CD8-positive, alpha-beta T cell (primary cell): ENCODE measurements at regions of chr17 and their contacts with region 1.

Region 1: GRCh38 chr17:41665566-41666236 is 23.0 kb upstream of the EIF1 start:
- DNase-seq: peak; percentile 77 to 95 (median 89)
- ATAC-seq: peak; percentile 78
- H3K4me3 ChIP-seq: peak overlapping the region; percentile 56 to 61
- H3K4me3 Mint-ChIP-seq: peak overlapping the region; percentile 85
- H3K27ac ChIP-seq: peak overlapping the region; percentile 82 to 97
- H3K27ac Mint-ChIP-seq: peak overlapping the region; percentile 94
- H3K4me1 ChIP-seq: peaks cover 5% of the 10 kb centered on the region
- H3K4me1 Mint-ChIP-seq: peaks cover 24% of the 10 kb centered on the region
- H3K27me3 ChIP-seq: no peaks in the 10 kb centered on the region
- H3K27me3 Mint-ChIP-seq: no peaks in the 10 kb centered on the region
- CTCF ChIP-seq: peak; percentile 96

Region 2: DNA sequence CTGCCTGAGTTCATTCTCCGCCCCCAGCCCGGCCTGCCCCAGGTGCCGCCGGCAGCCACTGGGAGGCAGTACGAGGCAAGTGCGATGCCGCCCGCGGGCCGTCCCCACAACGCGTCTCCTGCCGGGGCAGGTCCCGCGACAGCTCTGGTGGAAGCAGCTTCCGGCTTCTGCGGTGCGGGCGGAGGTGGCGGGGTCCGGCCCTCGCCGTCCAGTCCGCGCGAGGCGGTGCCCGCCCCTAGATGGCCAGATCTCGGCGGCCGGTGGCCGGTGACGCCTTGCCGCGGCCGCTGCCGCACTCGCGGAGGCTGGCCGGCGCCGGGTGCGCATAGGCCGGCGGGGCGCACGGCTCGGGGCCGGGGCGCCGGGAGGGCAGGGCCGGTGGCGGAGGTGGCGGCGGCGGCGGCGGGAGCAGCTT is 1303.0 kb before region 1 on chr17:
- CTCF ChIA-PET with region 1: no interaction called
- POLR2A ChIA-PET with region 1: no interaction called
- intact Hi-C with region 1: loop called in 1 of 2 experiments (anchors 1 kb)
- DNase-seq: peak; percentile 55 to 82 (median 77)
- ATAC-seq: peak; percentile 79
- H3K4me3 ChIP-seq: peak overlapping the region in 1 of 2 experiments; percentile 20
- H3K4me3 Mint-ChIP-seq: peak overlapping the region; percentile 78
- H3K27ac ChIP-seq: no peak overlapping the region
- H3K27ac Mint-ChIP-seq: no peak overlapping the region
- H3K4me1 ChIP-seq: peaks cover 15% of the 10 kb centered on the region
- H3K4me1 Mint-ChIP-seq: peaks cover 10% of the 10 kb centered on the region
- H3K27me3 ChIP-seq: peaks cover 0 to 6% of the 10 kb centered on the region in 2 experiments
- H3K27me3 Mint-ChIP-seq: peaks cover 6% of the 10 kb centered on the region
- CTCF ChIP-seq: peak; percentile 62

Region 3: DNA sequence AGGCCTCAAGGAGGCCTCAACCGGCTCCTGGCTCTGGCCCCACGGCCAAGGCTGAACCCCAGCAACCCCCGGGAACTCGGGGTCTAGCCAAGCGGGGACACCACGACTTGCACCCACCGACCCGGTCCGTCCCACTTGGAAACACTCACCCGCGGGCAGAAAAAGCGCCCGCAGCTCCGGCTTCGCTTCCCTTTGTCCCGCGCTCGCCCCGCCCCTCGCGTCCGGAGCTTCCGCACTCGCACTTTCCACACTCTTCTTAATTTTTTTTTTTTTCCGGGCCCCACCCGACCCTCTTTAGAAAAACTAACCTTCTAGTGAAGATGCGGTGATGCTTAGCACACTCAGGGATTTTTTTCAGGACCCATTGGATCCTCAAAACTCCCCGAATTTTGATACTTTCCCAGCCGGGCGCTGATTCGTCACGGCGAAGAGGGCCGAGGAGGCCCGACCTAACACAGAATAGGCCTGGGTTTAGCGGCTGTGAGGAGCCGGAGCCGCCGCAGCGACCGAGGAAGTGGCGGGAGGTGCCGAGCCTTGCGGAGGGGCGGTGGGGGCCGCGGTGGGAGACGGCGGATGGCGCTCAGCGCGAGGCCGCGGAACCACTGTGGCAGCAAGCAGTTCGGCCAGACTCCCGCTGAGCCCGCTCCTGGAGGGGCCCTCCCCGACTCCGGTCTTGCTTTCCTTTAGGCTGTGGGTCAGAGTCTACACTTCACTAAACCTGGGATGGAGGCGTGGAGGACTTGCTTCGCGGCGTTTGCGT is 1017.9 kb before region 1 on chr17 and contains the start of gene SMARCE1:
- CTCF ChIA-PET with region 1: no interaction called
- POLR2A ChIA-PET with region 1: no interaction called
- intact Hi-C with region 1: loop called in 1 of 2 experiments (anchors 10 kb)
- DNase-seq: peak; percentile 51 to 88 (median 73)
- ATAC-seq: peak; percentile 66
- H3K4me3 ChIP-seq: peak within 1 kb of the TSS; percentile 85 to 96
- H3K4me3 Mint-ChIP-seq: peak within 1 kb of the TSS; percentile 95
- H3K27ac ChIP-seq: peak within 1 kb of the TSS; percentile 95 to 99
- H3K27ac Mint-ChIP-seq: peak within 1 kb of the TSS; percentile 99
- H3K4me1 ChIP-seq: peaks cover 36% of the 10 kb centered on the region
- H3K4me1 Mint-ChIP-seq: peaks cover 40% of the 10 kb centered on the region
- H3K27me3 ChIP-seq: no peaks in the 10 kb centered on the region
- H3K27me3 Mint-ChIP-seq: no peaks in the 10 kb centered on the region
- CTCF ChIP-seq: no peak
- total RNA-seq, gene SMARCE1: 64.8 to 74.9 TPM

Region 4: DNA sequence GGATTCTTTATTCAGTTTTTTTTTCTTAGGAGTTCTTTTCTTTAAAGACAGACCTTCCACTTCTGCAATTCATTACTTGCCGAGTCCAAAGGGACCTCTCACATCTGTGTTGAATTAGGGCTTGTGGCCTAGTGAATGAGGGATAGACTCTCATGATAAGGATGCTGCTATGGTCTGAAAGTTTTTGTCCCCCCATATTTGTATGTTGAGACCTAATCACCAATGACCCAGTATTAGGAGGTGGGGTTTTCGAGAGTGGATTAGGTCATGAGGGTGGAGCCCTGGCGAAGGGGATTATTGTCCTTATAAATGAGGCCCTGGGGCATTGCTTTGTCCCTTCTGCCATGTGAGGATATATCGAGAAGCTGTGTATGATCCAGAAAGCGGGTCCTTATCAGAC is 808.2 kb before region 1 on chr17:
- CTCF ChIA-PET with region 1: interaction called, 19 read pairs
- POLR2A ChIA-PET with region 1: no interaction called
- intact Hi-C with region 1: loop called (anchors 1 kb)
- DNase-seq: no peak
- ATAC-seq: no peak
- H3K4me3 ChIP-seq: no peak overlapping the region
- H3K4me3 Mint-ChIP-seq: no peak overlapping the region
- H3K27ac ChIP-seq: no peak overlapping the region
- H3K27ac Mint-ChIP-seq: no peak overlapping the region
- H3K4me1 ChIP-seq: no peaks in the 10 kb centered on the region
- H3K4me1 Mint-ChIP-seq: peaks cover 2% of the 10 kb centered on the region
- H3K27me3 ChIP-seq: no peaks in the 10 kb centered on the region
- H3K27me3 Mint-ChIP-seq: peaks cover 17% of the 10 kb centered on the region
- CTCF ChIP-seq: no peak

Region 5: GRCh38 chr17:41127371-41127770 is 538.3 kb before region 1 on chr17:
- CTCF ChIA-PET with region 1: no interaction called
- POLR2A ChIA-PET with region 1: no interaction called
- intact Hi-C with region 1: loop called in 1 of 2 experiments (anchors 10 kb)
- DNase-seq: no peak
- ATAC-seq: no peak
- H3K4me3 ChIP-seq: no peak overlapping the region
- H3K4me3 Mint-ChIP-seq: no peak overlapping the region
- H3K27ac ChIP-seq: no peak overlapping the region
- H3K27ac Mint-ChIP-seq: no peak overlapping the region
- H3K4me1 ChIP-seq: peaks cover 43% of the 10 kb centered on the region
- H3K4me1 Mint-ChIP-seq: peaks cover 69% of the 10 kb centered on the region
- H3K27me3 ChIP-seq: no peaks in the 10 kb centered on the region
- H3K27me3 Mint-ChIP-seq: no peaks in the 10 kb centered on the region
- CTCF ChIP-seq: no peak

Region 6: DNA sequence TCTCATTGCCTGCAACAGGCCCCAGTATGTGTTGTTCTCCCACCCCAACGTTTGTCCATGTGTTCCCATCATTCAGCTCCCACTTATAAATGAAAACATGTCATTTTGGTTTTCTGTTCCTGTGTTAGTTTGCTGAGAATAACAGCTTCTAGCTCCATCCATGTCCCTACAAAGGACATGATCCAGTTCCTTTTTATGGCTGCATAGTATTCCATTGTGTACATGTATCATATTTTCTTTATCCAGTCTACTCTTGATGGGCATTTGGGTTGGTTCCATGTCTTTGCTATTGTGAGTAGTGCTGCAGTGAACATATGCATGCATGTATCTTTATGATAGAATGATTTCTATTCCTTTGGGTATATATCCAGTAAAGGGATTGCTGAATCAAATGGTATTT is 450.0 kb before region 1 on chr17:
- CTCF ChIA-PET with region 1: no interaction called
- POLR2A ChIA-PET with region 1: no interaction called
- intact Hi-C with region 1: no loop called
- DNase-seq: no peak
- ATAC-seq: no peak
- H3K4me3 ChIP-seq: no peak overlapping the region
- H3K4me3 Mint-ChIP-seq: no peak overlapping the region
- H3K27ac ChIP-seq: no peak overlapping the region
- H3K27ac Mint-ChIP-seq: no peak overlapping the region
- H3K4me1 ChIP-seq: no peaks in the 10 kb centered on the region
- H3K4me1 Mint-ChIP-seq: peaks cover 8% of the 10 kb centered on the region
- H3K27me3 ChIP-seq: no peaks in the 10 kb centered on the region
- H3K27me3 Mint-ChIP-seq: peaks cover 6% of the 10 kb centered on the region
- CTCF ChIP-seq: no peak

Region 7: DNA sequence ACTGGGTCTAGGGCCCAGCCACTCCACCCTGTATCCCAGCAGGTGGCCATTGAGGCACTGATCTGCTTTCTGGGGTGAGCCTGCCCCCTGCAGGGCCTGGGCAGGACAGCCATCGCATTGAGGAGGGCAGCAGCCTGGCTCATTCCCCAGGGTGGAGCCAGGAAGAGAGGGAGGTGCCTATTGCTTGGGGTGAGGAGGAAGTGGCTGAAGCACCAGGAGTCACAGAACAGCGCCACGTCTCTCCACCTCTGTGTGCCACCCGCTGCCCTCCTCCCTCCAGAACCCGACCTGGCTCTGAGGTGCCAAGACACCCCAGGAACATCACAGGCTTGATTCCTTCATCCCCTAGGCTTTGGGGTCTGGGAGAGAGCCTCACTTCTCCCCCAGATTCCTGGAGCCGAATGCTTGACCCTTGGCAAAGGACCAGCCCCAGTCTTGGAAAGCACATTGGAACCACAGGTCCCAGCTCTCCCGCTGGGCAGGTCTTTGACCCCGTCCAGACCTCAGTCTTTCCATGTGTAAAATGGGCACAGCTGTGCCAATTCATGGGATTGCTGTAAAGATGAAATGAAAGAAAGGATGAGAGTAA is 168.8 kb before region 1 on chr17:
- CTCF ChIA-PET with region 1: no interaction called
- POLR2A ChIA-PET with region 1: no interaction called
- intact Hi-C with region 1: no loop called
- DNase-seq: peak; percentile 14 to 70 (median 46)
- ATAC-seq: peak; percentile 79
- H3K4me3 ChIP-seq: no peak overlapping the region
- H3K4me3 Mint-ChIP-seq: no peak overlapping the region
- H3K27ac ChIP-seq: no peak overlapping the region
- H3K27ac Mint-ChIP-seq: no peak overlapping the region
- H3K4me1 ChIP-seq: peaks cover 8% of the 10 kb centered on the region
- H3K4me1 Mint-ChIP-seq: peaks cover 7% of the 10 kb centered on the region
- H3K27me3 ChIP-seq: no peaks in the 10 kb centered on the region
- H3K27me3 Mint-ChIP-seq: peaks cover 6% of the 10 kb centered on the region
- CTCF ChIP-seq: peak; percentile 49

Region 8: GRCh38 chr17:41548844-41549595 is 116.7 kb before region 1 on chr17:
- CTCF ChIA-PET with region 1: interaction called, 93 read pairs
- POLR2A ChIA-PET with region 1: interaction called, 4 read pairs
- intact Hi-C with region 1: loop called (anchors 1 kb)
- DNase-seq: peak; percentile 72 to 90 (median 84)
- ATAC-seq: peak; percentile 87
- H3K4me3 ChIP-seq: peak overlapping the region; percentile 11 to 40
- H3K4me3 Mint-ChIP-seq: peak overlapping the region; percentile 54
- H3K27ac ChIP-seq: no peak overlapping the region
- H3K27ac Mint-ChIP-seq: no peak overlapping the region
- H3K4me1 ChIP-seq: peaks cover 14% of the 10 kb centered on the region
- H3K4me1 Mint-ChIP-seq: peaks cover 8% of the 10 kb centered on the region
- H3K27me3 ChIP-seq: no peaks in the 10 kb centered on the region
- H3K27me3 Mint-ChIP-seq: peaks cover 13% of the 10 kb centered on the region
- CTCF ChIP-seq: peak; percentile 82

Region 9: GRCh38 chr17:41624208-41625101 is 41.2 kb before region 1 on chr17 and contains the start of gene KRT17:
- CTCF ChIA-PET with region 1: no interaction called
- POLR2A ChIA-PET with region 1: no interaction called
- intact Hi-C with region 1: no loop called
- DNase-seq: no peak
- ATAC-seq: no peak
- H3K4me3 ChIP-seq: no peak within 1 kb of the TSS
- H3K4me3 Mint-ChIP-seq: no peak within 1 kb of the TSS
- H3K27ac ChIP-seq: no peak within 1 kb of the TSS
- H3K27ac Mint-ChIP-seq: no peak within 1 kb of the TSS
- H3K4me1 ChIP-seq: no peaks in the 10 kb centered on the region
- H3K4me1 Mint-ChIP-seq: no peaks in the 10 kb centered on the region
- H3K27me3 ChIP-seq: no peaks in the 10 kb centered on the region
- H3K27me3 Mint-ChIP-seq: peaks cover 9% of the 10 kb centered on the region
- CTCF ChIP-seq: no peak
- total RNA-seq, gene KRT17: not detected

Region 10: GRCh38 chr17:41688699-41689496 is 23.2 kb after region 1 on chr17 and contains the start of gene EIF1:
- CTCF ChIA-PET with region 1: interaction called, 33 read pairs
- POLR2A ChIA-PET with region 1: interaction called, 101 read pairs
- intact Hi-C with region 1: loop called (anchors 1 kb)
- DNase-seq: peak; percentile 99 to 100 (median 100)
- ATAC-seq: peak; percentile 76
- H3K4me3 ChIP-seq: peak within 1 kb of the TSS; percentile 65 to 89
- H3K4me3 Mint-ChIP-seq: peak within 1 kb of the TSS; percentile 95
- H3K27ac ChIP-seq: peak within 1 kb of the TSS; percentile 93 to 100
- H3K27ac Mint-ChIP-seq: peak within 1 kb of the TSS; percentile 99
- H3K4me1 ChIP-seq: peaks cover 31% of the 10 kb centered on the region
- H3K4me1 Mint-ChIP-seq: peaks cover 36% of the 10 kb centered on the region
- H3K27me3 ChIP-seq: no peaks in the 10 kb centered on the region
- H3K27me3 Mint-ChIP-seq: no peaks in the 10 kb centered on the region
- CTCF ChIP-seq: no peak
- total RNA-seq, gene EIF1: 3,749 to 3,996 TPM